ENCODE measurements at regions of chr3 and their contacts with region 1.

Region 1: DNA sequence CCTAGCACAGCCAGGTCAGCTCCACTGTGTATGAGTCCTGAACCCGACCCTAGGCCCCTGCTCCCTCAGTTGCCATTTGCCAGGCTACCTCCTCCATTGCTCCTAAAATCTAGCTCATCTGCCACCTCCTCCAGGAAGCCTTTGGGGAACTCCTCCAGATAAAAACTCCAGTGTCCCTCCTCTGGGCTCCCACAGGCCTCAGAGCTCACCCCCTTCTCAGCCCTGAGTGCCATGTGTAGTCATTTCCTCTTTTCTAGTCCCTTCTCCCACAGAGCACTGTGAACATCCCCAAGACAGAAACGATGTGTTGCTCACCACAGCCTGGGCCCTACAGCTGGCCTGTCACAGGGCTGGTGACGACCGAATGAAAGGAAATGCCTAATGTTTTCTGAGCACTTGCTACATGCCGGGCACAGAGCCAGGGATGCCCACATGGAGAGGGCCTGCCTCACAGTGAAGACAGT is 61.0 kb downstream of the IQSEC1 start:
- DNase-seq: peak; percentile 83
- H3K4me3 Mint-ChIP-seq: peak overlapping the region; percentile 70
- H3K27ac Mint-ChIP-seq: peak overlapping the region; percentile 93
- H3K4me1 Mint-ChIP-seq: peaks cover 80% of the 10 kb centered on the region
- H3K27me3 Mint-ChIP-seq: no peaks in the 10 kb centered on the region

Region 2: DNA sequence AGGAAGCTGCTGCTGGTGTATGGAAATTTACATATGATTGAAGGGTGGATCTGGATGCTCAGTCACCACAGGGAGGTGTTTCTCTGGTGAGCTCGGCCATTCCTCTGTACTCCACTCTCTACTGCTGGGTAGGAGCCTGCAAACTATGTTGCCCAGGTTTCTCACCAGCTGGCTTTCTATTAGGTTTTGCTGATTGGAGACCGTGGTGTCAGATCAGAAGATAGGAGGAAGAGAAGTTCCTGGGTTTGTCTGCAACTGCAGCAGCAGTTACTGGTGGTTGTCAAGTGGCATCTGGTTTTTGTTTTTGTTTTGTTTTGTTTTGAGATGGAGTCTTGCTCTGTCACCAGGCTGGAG is 1227.3 kb before region 1 on chr3:
- CTCF ChIA-PET with region 1: no interaction called
- POLR2A ChIA-PET with region 1: no interaction called
- intact Hi-C with region 1: no loop called
- DNase-seq: peak; percentile 36
- H3K4me3 Mint-ChIP-seq: peak overlapping the region; percentile 23
- H3K27ac Mint-ChIP-seq: peak overlapping the region; percentile 66
- H3K4me1 Mint-ChIP-seq: peaks cover 14% of the 10 kb centered on the region
- H3K27me3 Mint-ChIP-seq: no peaks in the 10 kb centered on the region

Region 3: DNA sequence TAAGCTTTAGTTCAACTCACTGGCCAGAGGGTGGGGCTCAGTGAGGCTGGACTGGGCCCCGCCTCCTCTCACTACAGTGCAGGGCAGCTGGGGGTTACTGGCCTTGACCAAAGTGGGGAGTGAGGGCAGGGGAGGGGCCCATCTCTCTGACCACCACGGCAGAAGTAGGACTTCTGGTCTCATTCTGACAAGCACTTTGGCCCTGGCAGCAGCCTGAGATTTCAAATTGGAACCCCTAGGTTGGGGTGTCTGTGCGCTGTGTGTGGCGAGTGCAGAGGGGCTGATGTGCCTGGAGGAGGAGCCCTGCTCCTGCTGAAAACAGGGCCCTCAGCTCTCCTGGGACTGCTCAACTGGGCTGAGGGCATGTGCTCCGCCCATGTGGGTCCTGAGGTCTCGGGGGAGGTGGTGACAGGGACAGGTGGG is 110.6 kb before region 1 on chr3:
- CTCF ChIA-PET with region 1: no interaction called
- POLR2A ChIA-PET with region 1: no interaction called
- intact Hi-C with region 1: no loop called
- DNase-seq: no peak
- H3K4me3 Mint-ChIP-seq: no peak overlapping the region
- H3K27ac Mint-ChIP-seq: no peak overlapping the region
- H3K4me1 Mint-ChIP-seq: no peaks in the 10 kb centered on the region
- H3K27me3 Mint-ChIP-seq: no peaks in the 10 kb centered on the region

Region 4: DNA sequence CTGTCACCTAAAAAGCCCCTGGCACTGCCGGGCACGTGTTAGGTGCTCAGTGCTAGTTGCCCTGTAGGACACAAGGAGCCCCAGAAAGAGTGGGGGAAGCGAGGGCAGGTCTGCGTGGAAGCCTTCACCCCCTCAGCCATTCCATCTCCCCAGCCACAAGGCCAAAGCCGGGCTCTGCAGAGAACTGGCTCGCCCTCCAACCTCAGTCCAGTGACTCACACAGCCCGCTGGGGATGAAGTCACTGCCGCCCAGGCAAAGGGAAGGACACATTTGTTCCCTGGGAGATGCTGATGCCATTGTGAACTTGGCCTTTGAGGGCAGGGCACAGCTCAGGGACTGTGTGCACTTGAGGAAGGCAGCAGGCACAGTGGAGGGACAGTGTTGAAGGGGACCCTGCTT is 12.8 kb after region 1 on chr3:
- CTCF ChIA-PET with region 1: no interaction called
- POLR2A ChIA-PET with region 1: no interaction called
- intact Hi-C with region 1: no loop called
- DNase-seq: peak; percentile 37
- H3K4me3 Mint-ChIP-seq: no peak overlapping the region
- H3K27ac Mint-ChIP-seq: no peak overlapping the region
- H3K4me1 Mint-ChIP-seq: no peaks in the 10 kb centered on the region
- H3K27me3 Mint-ChIP-seq: no peaks in the 10 kb centered on the region

Region 5: GRCh38 chr3:13069495-13069894 is 57.2 kb after region 1 on chr3:
- CTCF ChIA-PET with region 1: no interaction called
- POLR2A ChIA-PET with region 1: interaction called, 4 read pairs
- intact Hi-C with region 1: loop called (anchors 1 kb)
- DNase-seq: peak; percentile 81
- H3K4me3 Mint-ChIP-seq: peak overlapping the region; percentile 3
- H3K27ac Mint-ChIP-seq: peak overlapping the region; percentile 85
- H3K4me1 Mint-ChIP-seq: peaks cover 25% of the 10 kb centered on the region
- H3K27me3 Mint-ChIP-seq: peaks cover 13% of the 10 kb centered on the region

Region 6: DNA sequence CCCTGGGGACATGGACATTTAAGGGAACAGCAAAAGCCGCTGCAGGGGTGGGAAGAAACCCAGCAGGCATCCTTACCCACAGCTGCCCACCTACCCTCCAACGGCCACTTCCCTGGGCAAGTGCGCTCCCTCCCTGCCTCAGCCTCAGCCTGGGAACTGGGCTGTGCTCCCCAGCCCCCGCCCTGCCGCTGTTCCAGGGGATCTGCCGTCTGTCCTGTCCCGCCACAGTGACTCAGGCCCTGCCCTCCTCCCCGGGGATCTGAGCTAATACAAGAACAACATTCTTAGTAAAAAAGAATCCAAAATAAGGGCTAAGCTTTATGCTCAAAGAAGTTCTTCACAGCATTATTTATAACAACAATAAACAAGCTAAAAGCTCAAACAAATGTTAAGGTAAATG is 68.3 kb after region 1 on chr3:
- CTCF ChIA-PET with region 1: no interaction called
- POLR2A ChIA-PET with region 1: no interaction called
- intact Hi-C with region 1: no loop called
- DNase-seq: no peak
- H3K4me3 Mint-ChIP-seq: no peak overlapping the region
- H3K27ac Mint-ChIP-seq: no peak overlapping the region
- H3K4me1 Mint-ChIP-seq: no peaks in the 10 kb centered on the region
- H3K27me3 Mint-ChIP-seq: peaks cover under 1% of the 10 kb centered on the region

Region 7: DNA sequence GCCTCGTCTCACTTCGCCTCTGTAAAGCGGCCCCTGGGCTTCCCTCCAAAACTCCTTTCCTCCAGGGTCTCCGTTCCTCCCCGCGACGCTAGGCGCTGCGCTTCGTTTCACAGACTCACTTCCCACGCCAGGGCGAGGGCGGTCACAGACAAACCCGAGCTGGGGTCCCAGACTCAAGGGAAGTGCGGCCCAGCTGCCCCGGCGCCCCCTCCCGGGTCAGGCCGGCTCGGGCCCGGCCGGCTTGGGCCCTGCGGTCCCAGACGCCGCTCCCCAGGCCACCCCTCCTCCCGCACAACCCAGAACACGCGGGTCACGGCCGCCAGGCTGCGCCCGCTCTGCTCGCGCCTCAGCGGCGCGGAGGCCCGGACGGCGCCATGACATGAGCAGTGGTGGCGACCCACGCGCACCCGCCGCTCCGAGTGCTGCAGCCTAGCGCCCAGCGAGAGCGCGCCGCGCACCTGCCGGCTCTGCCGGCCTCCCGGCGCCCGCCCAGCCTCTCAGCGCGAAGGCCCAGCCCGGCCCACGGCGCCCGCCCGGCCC is 407.3 kb after region 1 on chr3:
- CTCF ChIA-PET with region 1: no interaction called
- POLR2A ChIA-PET with region 1: interaction called, 4 read pairs
- intact Hi-C with region 1: loop called (anchors 2 kb)
- DNase-seq: peak; percentile 68
- H3K4me3 Mint-ChIP-seq: peak overlapping the region; percentile 90
- H3K27ac Mint-ChIP-seq: peak overlapping the region; percentile 90
- H3K4me1 Mint-ChIP-seq: peaks cover 57% of the 10 kb centered on the region
- H3K27me3 Mint-ChIP-seq: no peaks in the 10 kb centered on the region